ENCODE measurements at regions of chr11 and their contacts with region 1.

Region 1: GRCh38 chr11:32583459-32584271 is at the start of gene EIF3M:
- DNase-seq: peak; percentile 97
- H3K4me3 ChIP-seq: peak within 1 kb of the TSS; percentile 84
- H3K27ac ChIP-seq: peak within 1 kb of the TSS; percentile 89
- H3K4me1 ChIP-seq: peaks cover 44% of the 10 kb centered on the region
- H3K27me3 ChIP-seq: peaks cover 3% of the 10 kb centered on the region
- CTCF ChIP-seq: no peak
- total RNA-seq, gene EIF3M: 153 TPM

Region 2: DNA sequence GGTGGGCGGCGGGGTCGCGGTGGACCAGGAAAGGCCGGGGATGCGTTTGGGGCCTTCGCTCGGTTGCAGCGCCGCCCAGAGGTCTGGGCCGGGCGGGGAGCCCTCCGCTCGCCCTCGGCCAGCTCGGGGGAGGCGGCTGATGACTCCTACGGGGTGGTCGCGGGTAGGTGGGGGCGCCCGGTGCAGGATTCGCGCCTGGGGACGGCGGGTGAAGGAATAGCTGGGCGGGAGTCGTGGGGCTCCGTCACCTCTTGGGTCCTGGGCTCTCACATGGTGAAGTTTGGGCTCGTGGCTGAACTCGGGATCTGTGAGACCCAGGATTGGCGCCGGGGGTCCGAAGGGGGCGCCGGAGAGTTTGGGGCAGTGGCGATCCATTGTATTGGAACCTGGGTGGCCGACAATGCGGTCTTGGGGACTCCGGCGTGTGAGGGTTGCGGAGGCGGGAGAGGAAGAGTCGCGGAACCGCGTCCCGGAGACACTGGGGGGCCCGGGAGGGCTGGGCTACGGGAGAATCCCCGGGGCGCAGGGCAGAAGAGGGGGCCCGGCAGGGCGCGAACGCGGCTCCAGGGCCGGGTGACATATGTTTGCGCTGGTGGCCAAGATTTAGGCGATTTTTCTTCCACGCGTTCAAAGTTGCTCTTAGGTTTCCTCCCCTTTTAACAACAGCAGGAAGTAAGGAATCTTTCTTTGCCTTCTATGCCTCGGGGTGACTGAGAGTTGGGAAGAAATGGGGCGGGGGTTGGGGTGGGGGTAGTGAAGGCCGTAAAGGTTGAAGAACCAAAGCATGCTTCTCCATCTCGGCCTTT is 309.9 kb after region 1 on chr11:
- intact Hi-C with region 1: loop called (anchors 10 kb)
- DNase-seq: peak; percentile 36
- H3K4me3 ChIP-seq: peak overlapping the region; percentile 96
- H3K27ac ChIP-seq: peak overlapping the region; percentile 97
- H3K4me1 ChIP-seq: peaks cover 41% of the 10 kb centered on the region
- H3K27me3 ChIP-seq: no peaks in the 10 kb centered on the region
- CTCF ChIP-seq: peak; percentile 53